B cell (primary cell): ENCODE measurements at regions of chr3 and their contacts with region 1.

Region 1: GRCh38 chr3:152376351-152377183 is 107.8 kb downstream of the MBNL1 start:
- DNase-seq: peak; percentile 95
- ATAC-seq: peak; percentile 95
- H3K4me3 ChIP-seq: peak overlapping the region in 1 of 5 experiments; percentile 35
- H3K4me3 Mint-ChIP-seq: peak overlapping the region; percentile 59
- H3K27ac ChIP-seq: peak overlapping the region; percentile 67 to 83
- H3K27ac Mint-ChIP-seq: peak overlapping the region; percentile 87
- H3K4me1 ChIP-seq: peaks cover 50 to 70% of the 10 kb centered on the region in 2 donors
- H3K4me1 Mint-ChIP-seq: peaks cover 68% of the 10 kb centered on the region
- H3K27me3 ChIP-seq: no peaks in the 10 kb centered on the region
- H3K27me3 Mint-ChIP-seq: no peaks in the 10 kb centered on the region
- CTCF ChIP-seq: no peak

Region 2: DNA sequence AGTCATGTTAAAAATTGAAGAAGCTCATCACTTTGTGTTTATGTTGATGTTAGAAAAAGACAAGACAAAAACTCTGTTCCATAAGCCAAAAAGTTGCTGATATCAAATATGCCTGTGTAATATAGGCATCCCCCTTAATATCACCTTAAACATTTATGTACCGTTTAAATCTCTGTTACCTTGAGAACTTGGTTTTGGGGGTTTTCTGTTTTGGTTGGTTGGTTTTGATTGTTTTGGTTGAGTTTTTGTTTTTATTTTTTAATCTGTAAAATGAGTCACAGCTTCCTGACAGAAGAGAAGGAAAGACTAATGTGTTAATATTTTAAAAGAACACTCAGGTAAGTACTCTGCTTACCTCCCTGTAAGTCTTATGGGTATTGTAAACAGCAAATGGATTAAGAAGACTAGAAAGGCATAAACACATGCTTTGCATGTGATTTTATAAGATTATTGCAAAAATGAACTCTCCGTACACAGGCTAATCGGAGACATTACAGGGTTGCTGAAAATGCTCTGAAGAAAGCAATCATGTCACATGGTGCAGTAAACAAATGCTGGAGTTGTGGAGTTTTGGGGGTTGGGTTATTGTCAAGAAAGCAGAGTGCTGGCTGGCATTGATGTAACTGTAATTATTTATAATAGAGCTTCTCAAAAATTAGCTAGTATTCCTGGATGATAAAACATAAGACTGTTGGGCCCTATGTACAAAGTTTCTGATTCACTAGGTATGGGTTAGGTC is 177.3 kb before region 1 on chr3:
- CTCF ChIA-PET with region 1: no interaction called
- POLR2A ChIA-PET with region 1: no interaction called
- intact Hi-C with region 1: loop called (anchors 2 kb)
- DNase-seq: peak; percentile 60
- ATAC-seq: peak; percentile 19
- H3K4me3 ChIP-seq: peak overlapping the region; percentile 16 to 69 (median 35)
- H3K4me3 Mint-ChIP-seq: peak overlapping the region; percentile 85
- H3K27ac ChIP-seq: peak overlapping the region; percentile 78 to 92
- H3K27ac Mint-ChIP-seq: peak overlapping the region; percentile 94
- H3K4me1 ChIP-seq: peaks cover 54 to 72% of the 10 kb centered on the region in 2 donors
- H3K4me1 Mint-ChIP-seq: peaks cover 71% of the 10 kb centered on the region
- H3K27me3 ChIP-seq: no peaks in the 10 kb centered on the region
- H3K27me3 Mint-ChIP-seq: no peaks in the 10 kb centered on the region
- CTCF ChIP-seq: no peak

Region 3: GRCh38 chr3:152365766-152366593 is 10.6 kb before region 1 on chr3:
- CTCF ChIA-PET with region 1: interaction called, 3 read pairs
- POLR2A ChIA-PET with region 1: no interaction called
- intact Hi-C with region 1: loop called (anchors 1 kb)
- DNase-seq: no peak
- ATAC-seq: no peak
- H3K4me3 ChIP-seq: no peak overlapping the region
- H3K4me3 Mint-ChIP-seq: no peak overlapping the region
- H3K27ac ChIP-seq: peak overlapping the region in 1 of 2 donors; percentile 11
- H3K27ac Mint-ChIP-seq: peak overlapping the region; percentile 12
- H3K4me1 ChIP-seq: peaks cover 7 to 25% of the 10 kb centered on the region in 2 donors
- H3K4me1 Mint-ChIP-seq: peaks cover 70% of the 10 kb centered on the region
- H3K27me3 ChIP-seq: no peaks in the 10 kb centered on the region
- H3K27me3 Mint-ChIP-seq: no peaks in the 10 kb centered on the region
- CTCF ChIP-seq: no peak

Region 4: GRCh38 chr3:152413240-152413639 is 36.7 kb after region 1 on chr3:
- CTCF ChIA-PET with region 1: no interaction called
- POLR2A ChIA-PET with region 1: no interaction called
- intact Hi-C with region 1: loop called (anchors 5 kb)
- DNase-seq: no peak
- ATAC-seq: no peak
- H3K4me3 ChIP-seq: no peak overlapping the region
- H3K4me3 Mint-ChIP-seq: no peak overlapping the region
- H3K27ac ChIP-seq: peak overlapping the region in 1 of 2 donors; percentile 52
- H3K27ac Mint-ChIP-seq: peak overlapping the region; percentile 39
- H3K4me1 ChIP-seq: peaks cover 0 to 8% of the 10 kb centered on the region in 2 donors
- H3K4me1 Mint-ChIP-seq: peaks cover 37% of the 10 kb centered on the region
- H3K27me3 ChIP-seq: no peaks in the 10 kb centered on the region
- H3K27me3 Mint-ChIP-seq: no peaks in the 10 kb centered on the region
- CTCF ChIP-seq: no peak